ENCODE measurements at regions of chr17 and their contacts with region 1.

Region 1: DNA sequence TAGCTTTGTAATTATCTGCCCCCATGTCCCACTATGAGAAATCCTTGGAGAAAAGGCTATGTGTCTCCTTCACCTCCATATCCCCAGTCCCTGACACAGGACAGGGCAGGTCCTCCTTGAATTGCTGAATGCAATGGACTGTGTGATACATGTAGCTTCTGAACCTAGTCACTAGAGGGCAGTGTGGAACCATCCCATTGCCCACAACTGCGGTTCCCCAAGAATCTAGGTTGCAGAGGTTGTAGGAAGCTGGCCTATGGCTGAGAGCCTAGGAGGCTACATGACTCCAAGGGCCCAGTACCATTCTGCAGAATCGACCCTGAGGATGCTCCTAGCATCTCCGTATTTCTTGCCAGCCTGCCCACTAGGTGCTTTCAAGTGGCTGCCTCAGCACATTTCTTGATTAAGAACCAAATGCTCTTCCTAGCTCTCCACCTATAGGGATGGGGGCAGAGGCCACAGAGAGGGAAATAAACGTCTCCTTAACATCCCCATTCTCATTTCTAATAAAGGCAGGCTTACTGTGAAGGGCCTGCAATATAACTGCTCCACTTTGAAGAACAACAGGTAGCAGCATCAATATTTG is 394.0 kb downstream of the CA10 start:
- DNase-seq: peak; percentile 64
- H3K4me3 Mint-ChIP-seq: no peak overlapping the region
- H3K27ac Mint-ChIP-seq: no peak overlapping the region
- H3K4me1 Mint-ChIP-seq: peaks cover 5% of the 10 kb centered on the region
- H3K27me3 Mint-ChIP-seq: peaks cover 7% of the 10 kb centered on the region

Region 2: DNA sequence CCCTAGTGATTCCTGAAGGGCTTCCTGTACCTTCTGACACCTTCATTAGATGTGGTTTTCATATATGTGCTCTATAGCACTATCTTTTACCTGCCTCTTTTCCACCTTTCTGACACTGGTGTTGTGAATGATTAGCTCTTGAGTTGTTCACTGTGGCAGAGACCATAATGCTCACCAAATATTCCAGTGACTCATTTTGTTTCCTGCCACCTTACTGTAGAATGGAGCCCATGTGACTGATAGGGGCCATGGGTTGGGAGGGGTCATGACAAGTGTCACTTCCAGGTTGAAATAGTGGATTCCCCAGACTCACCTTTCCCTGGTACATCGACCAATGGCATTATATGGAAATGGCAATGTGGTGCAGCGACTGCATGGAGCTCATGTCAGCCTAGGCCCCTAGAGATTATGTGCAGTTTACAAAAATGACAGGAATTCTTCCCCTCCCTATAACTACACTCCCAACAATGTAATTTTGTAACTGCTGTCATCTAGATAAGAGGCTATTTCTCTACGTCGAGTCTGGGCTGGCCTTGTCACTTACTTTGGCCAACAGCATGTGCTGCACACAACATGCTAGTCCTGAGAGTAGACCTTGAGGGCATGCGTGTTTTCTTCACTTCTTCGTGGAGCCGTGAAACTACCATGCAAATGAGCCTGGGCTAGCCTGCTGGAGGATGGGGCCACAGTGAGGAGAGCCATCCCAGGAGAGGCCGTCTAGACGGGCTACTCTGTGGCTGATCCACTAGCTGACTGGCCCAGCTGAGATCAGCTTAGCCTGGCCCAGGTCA is 15.5 kb before region 1 on chr17:
- CTCF ChIA-PET with region 1: interaction called, 19 read pairs
- POLR2A ChIA-PET with region 1: no interaction called
- intact Hi-C with region 1: no loop called
- DNase-seq: no peak
- H3K4me3 Mint-ChIP-seq: no peak overlapping the region
- H3K27ac Mint-ChIP-seq: no peak overlapping the region
- H3K4me1 Mint-ChIP-seq: peaks cover 2% of the 10 kb centered on the region
- H3K27me3 Mint-ChIP-seq: no peaks in the 10 kb centered on the region

Region 3: DNA sequence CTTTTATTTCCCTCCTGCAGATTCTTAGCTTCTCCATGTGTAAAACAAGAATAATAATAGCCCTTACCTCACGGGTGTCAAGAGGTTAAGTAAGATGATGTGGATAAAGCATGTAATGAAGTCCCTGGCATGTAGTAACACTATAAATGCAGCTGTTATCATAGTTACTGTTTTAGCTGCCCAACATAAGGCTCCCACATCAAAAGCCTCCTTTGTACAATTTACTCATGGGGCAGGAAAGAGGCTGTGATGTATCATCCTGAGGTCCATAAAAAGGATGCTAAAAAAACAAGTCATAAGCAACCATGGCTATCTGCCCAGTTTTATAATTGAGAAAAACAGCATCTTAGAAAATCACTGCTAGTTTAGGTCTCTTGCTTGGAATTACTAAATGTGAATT is 54.3 kb after region 1 on chr17:
- CTCF ChIA-PET with region 1: interaction called, 3 read pairs
- POLR2A ChIA-PET with region 1: no interaction called
- intact Hi-C with region 1: loop called (anchors 5 kb)
- DNase-seq: no peak
- H3K4me3 Mint-ChIP-seq: no peak overlapping the region
- H3K27ac Mint-ChIP-seq: no peak overlapping the region
- H3K4me1 Mint-ChIP-seq: peaks cover 11% of the 10 kb centered on the region
- H3K27me3 Mint-ChIP-seq: peaks cover 9% of the 10 kb centered on the region

Region 4: GRCh38 chr17:51860954-51861561 is 96.6 kb after region 1 on chr17:
- CTCF ChIA-PET with region 1: no interaction called
- POLR2A ChIA-PET with region 1: no interaction called
- intact Hi-C with region 1: loop called (anchors 5 kb)
- DNase-seq: peak; percentile 36
- H3K4me3 Mint-ChIP-seq: no peak overlapping the region
- H3K27ac Mint-ChIP-seq: no peak overlapping the region
- H3K4me1 Mint-ChIP-seq: no peaks in the 10 kb centered on the region
- H3K27me3 Mint-ChIP-seq: peaks cover 7% of the 10 kb centered on the region

Region 5: DNA sequence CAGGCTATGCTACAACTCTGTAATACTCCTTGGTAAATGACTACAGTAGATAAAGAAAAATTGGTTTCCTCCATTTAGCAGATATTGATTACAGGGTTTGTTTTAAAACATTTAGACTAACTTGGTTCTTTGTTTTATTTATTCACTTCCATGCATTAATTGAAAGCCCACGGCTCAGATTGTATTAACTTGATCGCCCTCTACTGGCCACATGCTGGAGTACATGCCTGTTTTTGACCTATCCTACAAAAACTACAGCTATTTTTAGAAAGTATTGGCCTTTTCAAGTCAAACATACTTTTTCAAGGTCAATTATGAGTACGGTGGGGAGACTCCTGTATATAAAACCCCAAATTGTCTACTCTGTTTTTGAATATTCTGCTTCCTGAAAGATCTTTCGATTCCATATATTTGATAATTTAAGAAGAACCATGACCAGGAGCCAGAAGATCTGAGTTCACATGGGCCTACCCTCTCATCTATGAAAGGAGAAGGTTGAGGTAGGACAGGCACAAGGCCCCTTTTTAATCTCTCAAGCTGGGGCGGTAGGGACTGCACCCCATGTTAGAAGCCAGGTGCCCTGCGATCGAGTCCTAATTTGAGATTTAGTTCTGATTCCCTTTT is 342.3 kb after region 1 on chr17:
- CTCF ChIA-PET with region 1: interaction called, 42 read pairs
- POLR2A ChIA-PET with region 1: no interaction called
- intact Hi-C with region 1: loop called (anchors 1 kb)
- DNase-seq: peak; percentile 46
- H3K4me3 Mint-ChIP-seq: no peak overlapping the region
- H3K27ac Mint-ChIP-seq: no peak overlapping the region
- H3K4me1 Mint-ChIP-seq: no peaks in the 10 kb centered on the region
- H3K27me3 Mint-ChIP-seq: peaks cover 10% of the 10 kb centered on the region

Measured in activated CD4-positive, alpha-beta memory T cell treated with anti-CD3 and anti-CD28 coated beads for 36 hours (primary cell).